ENCODE measurements at regions of chr6 and their contacts with region 1.

Region 1: GRCh38 chr6:149823013-149823412 is 41.1 kb downstream of the LRP11 start:
- DNase-seq: no peak
- H3K4me3 Mint-ChIP-seq: no peak overlapping the region
- H3K27ac Mint-ChIP-seq: no peak overlapping the region
- H3K4me1 Mint-ChIP-seq: no peaks in the 10 kb centered on the region
- H3K27me3 Mint-ChIP-seq: no peaks in the 10 kb centered on the region
- CTCF ChIP-seq: no peak

Region 2: GRCh38 chr6:149723771-149724417 is 99.1 kb before region 1 on chr6:
- CTCF ChIA-PET with region 1: interaction called, 3 read pairs
- POLR2A ChIA-PET with region 1: no interaction called
- intact Hi-C with region 1: loop called (anchors 5 kb)
- DNase-seq: peak; percentile 87
- H3K4me3 Mint-ChIP-seq: no peak overlapping the region
- H3K27ac Mint-ChIP-seq: no peak overlapping the region
- H3K4me1 Mint-ChIP-seq: peaks cover 6% of the 10 kb centered on the region
- H3K27me3 Mint-ChIP-seq: no peaks in the 10 kb centered on the region
- CTCF ChIP-seq: peak; percentile 82

Measured in MCF 10A (cell line).